ENCODE measurements at regions of chr6 and their contacts with region 1.

Region 1: GRCh38 chr6:44246663-44247337 is at the start of gene HSP90AB1:
- DNase-seq: peak; percentile 97
- total RNA-seq, gene HSP90AB1: 873 TPM

Region 2: DNA sequence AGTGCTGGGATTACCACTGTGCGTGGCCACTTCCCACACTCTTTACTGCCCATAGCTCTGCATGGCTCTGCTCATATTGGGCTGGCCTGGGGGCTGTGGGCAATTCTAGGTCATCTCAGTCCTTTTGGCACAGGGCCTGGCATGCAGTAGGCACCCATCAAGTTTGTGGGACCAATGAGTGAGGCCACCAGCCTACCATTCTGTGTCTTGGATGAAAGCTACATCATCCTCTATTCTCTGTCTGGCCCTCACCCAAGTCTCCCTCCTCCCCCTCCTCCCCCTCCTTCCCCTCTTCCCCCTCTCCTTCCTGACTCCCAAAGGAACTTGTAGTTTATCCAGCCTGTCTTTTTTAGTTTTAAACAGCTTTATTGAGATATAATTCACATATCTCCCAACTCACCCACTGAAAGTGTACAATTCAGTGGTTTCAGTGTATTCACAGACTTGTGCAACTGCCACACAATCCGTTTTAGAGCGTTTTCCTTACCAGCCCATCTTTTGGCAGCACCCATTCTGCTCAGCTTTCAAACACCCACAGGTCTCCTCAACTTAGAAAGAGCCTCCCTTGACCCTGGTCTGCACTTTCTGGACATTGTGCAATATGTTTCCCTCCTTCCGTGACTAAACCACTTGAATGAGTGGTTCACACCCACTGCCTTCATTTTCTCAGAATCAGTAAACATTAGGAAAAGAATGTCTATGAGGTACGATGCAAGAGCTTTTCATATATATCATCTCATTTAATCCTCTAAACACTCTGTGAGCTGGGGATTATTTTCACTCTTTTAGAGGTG is 537.7 kb before region 1 on chr6:
- intact Hi-C with region 1: no loop called
- DNase-seq: peak; percentile 73

Region 3: GRCh38 chr6:44221291-44221960 is 25.4 kb before region 1 on chr6:
- intact Hi-C with region 1: loop called (anchors 1 kb)
- DNase-seq: peak; percentile 95

Region 4: DNA sequence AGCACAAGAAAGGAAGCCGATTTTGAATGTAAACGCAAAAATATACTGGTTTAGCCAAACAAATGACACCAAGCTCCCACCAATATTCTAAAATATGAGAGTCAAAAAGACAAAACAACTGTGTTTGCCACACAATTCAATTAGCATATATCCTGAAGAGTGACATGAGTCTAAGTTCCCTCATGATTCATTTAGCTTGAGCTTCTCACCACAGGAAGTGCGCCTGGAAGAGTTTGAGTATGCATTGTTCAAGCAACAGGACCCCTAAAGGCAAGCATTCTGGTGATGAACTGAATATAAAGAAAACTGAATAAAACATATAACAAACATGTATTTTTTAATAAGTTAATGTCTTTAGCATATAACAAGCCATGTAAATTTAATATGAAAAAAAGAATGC is 966.2 kb after region 1 on chr6:
- intact Hi-C with region 1: no loop called
- DNase-seq: no peak